Activated naive CD4-positive, alpha-beta T cell treated with anti-CD3 and anti-CD28 coated beads for 36 hours (primary cell): ENCODE measurements at regions of chr12 and their contacts with region 1.

Region 1: DNA sequence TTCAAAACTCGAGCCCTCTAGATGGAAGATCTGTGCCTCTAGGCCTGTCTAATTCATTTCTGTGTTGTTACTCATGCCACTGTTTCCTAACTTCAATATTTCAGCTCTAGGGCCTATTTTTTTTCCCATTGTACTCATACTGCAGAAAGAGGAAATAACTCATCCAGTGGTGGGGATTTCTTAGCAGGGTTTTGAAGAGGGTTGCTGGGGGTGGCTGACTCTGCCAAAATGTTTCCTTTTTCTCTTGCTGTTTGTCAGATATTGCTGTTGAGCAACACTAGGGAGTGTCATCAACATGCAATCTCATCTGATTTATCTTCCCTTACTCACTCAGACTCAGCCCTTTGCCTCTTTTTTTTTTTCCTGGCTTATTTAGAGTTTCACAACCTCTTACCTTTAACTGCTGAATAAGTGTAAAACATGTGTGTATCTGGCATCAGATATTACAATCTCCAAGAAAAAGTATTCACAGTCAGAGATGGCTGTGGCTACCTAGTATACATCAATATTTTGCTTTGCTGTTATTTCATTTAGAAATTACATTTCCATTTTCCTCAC is 189.5 kb downstream of the DUSP6 start:
- DNase-seq: peak; percentile 81
- H3K4me3 Mint-ChIP-seq: no peak overlapping the region
- H3K27ac Mint-ChIP-seq: no peak overlapping the region
- H3K4me1 Mint-ChIP-seq: peaks cover 8% of the 10 kb centered on the region
- H3K27me3 Mint-ChIP-seq: no peaks in the 10 kb centered on the region

Region 2: GRCh38 chr12:88241862-88242570 is 920.8 kb before region 1 on chr12:
- CTCF ChIA-PET with region 1: no interaction called
- intact Hi-C with region 1: loop called (anchors 10 kb)
- DNase-seq: peak; percentile 65
- H3K4me3 Mint-ChIP-seq: no peak overlapping the region
- H3K27ac Mint-ChIP-seq: peak overlapping the region; percentile 68
- H3K4me1 Mint-ChIP-seq: peaks cover 36% of the 10 kb centered on the region
- H3K27me3 Mint-ChIP-seq: peaks cover 14% of the 10 kb centered on the region

Region 3: DNA sequence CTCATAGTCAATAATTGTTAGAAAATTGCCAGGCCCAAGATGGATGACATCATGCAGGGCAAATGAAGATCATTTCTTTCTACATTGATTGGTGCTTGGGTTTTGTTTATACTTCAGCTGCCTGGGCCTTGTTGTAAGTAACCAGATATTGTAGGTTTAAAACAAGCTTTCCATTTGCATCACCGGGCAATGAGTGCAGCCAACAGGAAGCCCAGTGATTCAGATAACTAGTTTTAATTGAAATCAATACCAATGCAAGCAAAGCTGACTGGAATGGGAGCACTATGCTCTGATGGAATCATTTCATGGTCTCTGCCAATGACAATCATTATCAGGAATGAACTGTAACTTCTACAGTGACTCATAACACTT is 89.8 kb before region 1 on chr12:
- CTCF ChIA-PET with region 1: no interaction called
- intact Hi-C with region 1: loop called (anchors 1 kb)
- DNase-seq: peak; percentile 32
- H3K4me3 Mint-ChIP-seq: no peak overlapping the region
- H3K27ac Mint-ChIP-seq: peak overlapping the region; percentile 57
- H3K4me1 Mint-ChIP-seq: peaks cover 36% of the 10 kb centered on the region
- H3K27me3 Mint-ChIP-seq: no peaks in the 10 kb centered on the region

Region 4: GRCh38 chr12:89181271-89181920 is 18.6 kb after region 1 on chr12:
- CTCF ChIA-PET with region 1: interaction called, 3 read pairs
- intact Hi-C with region 1: loop called (anchors 1 kb)
- DNase-seq: no peak
- H3K4me3 Mint-ChIP-seq: no peak overlapping the region
- H3K27ac Mint-ChIP-seq: peak overlapping the region; percentile 50
- H3K4me1 Mint-ChIP-seq: peaks cover 22% of the 10 kb centered on the region
- H3K27me3 Mint-ChIP-seq: peaks cover 3% of the 10 kb centered on the region

Region 5: GRCh38 chr12:89461649-89462612 is 299.1 kb after region 1 on chr12:
- CTCF ChIA-PET with region 1: interaction called, 3 read pairs
- intact Hi-C with region 1: loop called (anchors 1 kb)
- DNase-seq: no peak
- H3K4me3 Mint-ChIP-seq: peak overlapping the region; percentile 15
- H3K27ac Mint-ChIP-seq: peak overlapping the region; percentile 48
- H3K4me1 Mint-ChIP-seq: peaks cover 13% of the 10 kb centered on the region
- H3K27me3 Mint-ChIP-seq: no peaks in the 10 kb centered on the region

Region 6: GRCh38 chr12:89494411-89495231 is 331.8 kb after region 1 on chr12:
- CTCF ChIA-PET with region 1: no interaction called
- intact Hi-C with region 1: loop called (anchors 1 kb)
- DNase-seq: peak; percentile 73
- H3K4me3 Mint-ChIP-seq: peak overlapping the region; percentile 5
- H3K27ac Mint-ChIP-seq: peak overlapping the region; percentile 77
- H3K4me1 Mint-ChIP-seq: peaks cover 17% of the 10 kb centered on the region
- H3K27me3 Mint-ChIP-seq: no peaks in the 10 kb centered on the region

Region 7: DNA sequence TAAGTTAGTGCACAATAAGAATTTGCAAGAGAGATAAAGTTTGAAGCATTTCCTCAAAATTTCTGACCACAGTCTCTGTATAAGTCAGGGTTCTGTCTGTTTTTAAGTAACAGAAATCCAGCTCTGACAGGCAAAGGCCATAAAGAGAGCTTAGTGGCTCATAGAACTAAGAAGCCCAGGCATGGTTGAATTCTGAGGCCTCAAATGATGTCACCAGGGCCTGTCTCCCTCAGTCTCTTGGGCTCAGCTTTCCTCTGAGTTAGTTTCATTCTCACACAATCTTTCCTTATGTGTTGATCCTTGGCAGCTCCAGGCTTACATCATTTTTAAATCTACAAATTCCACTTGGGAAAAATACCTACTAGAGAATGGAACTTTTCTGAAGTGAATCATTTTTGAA is 719.3 kb after region 1 on chr12:
- CTCF ChIA-PET with region 1: no interaction called
- intact Hi-C with region 1: loop called (anchors 5 kb)
- DNase-seq: peak; percentile 53
- H3K4me3 Mint-ChIP-seq: no peak overlapping the region
- H3K27ac Mint-ChIP-seq: peak overlapping the region; percentile 63
- H3K4me1 Mint-ChIP-seq: peaks cover 42% of the 10 kb centered on the region
- H3K27me3 Mint-ChIP-seq: no peaks in the 10 kb centered on the region